Activated T-helper 2 cell treated with anti-CD3 and anti-CD28 coated beads, Interferon-gamma antibody, Interleukin-2, Interleukin-4, amounts not matched to agents 10 μg/mL and 5 μg/mL and 100 μg/mL, durations not matched to agents 14 hours and 24 hours and 36 hours (primary cell): ENCODE measurements at regions of chr4 and their contacts with region 1.

Region 1: GRCh38 chr4:183504064-183504929 is 561 bp upstream of the ING2 start:
- DNase-seq: peak; percentile 99
- H3K4me3 Mint-ChIP-seq: peak overlapping the region; percentile 92
- H3K27ac Mint-ChIP-seq: peak overlapping the region; percentile 85
- H3K4me1 Mint-ChIP-seq: peaks cover 35% of the 10 kb centered on the region
- H3K27me3 Mint-ChIP-seq: no peaks in the 10 kb centered on the region

Region 2: GRCh38 chr4:183444214-183445066 is 59.9 kb before region 1 on chr4 and contains the start of gene CDKN2AIP:
- intact Hi-C with region 1: loop called (anchors 1 kb)
- DNase-seq: peak; percentile 94
- H3K4me3 Mint-ChIP-seq: peak within 1 kb of the TSS; percentile 99
- H3K27ac Mint-ChIP-seq: peak within 1 kb of the TSS; percentile 98
- H3K4me1 Mint-ChIP-seq: peaks cover 38% of the 10 kb centered on the region
- H3K27me3 Mint-ChIP-seq: no peaks in the 10 kb centered on the region
- total RNA-seq, gene CDKN2AIP: 23.3 and 25.3 TPM in 2 replicates

Region 3: DNA sequence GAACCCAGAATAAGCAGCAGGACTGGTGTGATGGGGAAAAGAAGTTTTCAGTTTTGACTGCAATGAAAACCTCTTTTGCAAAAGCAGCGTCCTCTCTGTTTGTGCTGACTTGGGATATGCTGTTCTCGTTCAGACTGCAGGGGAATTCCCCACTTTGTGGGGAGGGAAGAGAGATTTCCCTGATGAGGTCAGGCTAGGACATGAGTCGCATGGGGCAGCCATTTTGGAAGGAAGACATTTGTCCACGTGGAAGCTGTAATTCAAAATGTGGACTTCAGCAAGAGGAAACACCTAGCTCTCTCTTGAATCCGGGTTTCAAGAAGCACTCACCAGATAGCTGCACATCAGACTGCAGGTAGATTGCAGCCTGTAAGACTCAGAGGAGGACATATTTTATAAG is 39.8 kb after region 1 on chr4:
- intact Hi-C with region 1: no loop called
- DNase-seq: no peak
- H3K4me3 Mint-ChIP-seq: no peak overlapping the region
- H3K27ac Mint-ChIP-seq: no peak overlapping the region
- H3K4me1 Mint-ChIP-seq: no peaks in the 10 kb centered on the region
- H3K27me3 Mint-ChIP-seq: peaks cover 8% of the 10 kb centered on the region

Region 4: DNA sequence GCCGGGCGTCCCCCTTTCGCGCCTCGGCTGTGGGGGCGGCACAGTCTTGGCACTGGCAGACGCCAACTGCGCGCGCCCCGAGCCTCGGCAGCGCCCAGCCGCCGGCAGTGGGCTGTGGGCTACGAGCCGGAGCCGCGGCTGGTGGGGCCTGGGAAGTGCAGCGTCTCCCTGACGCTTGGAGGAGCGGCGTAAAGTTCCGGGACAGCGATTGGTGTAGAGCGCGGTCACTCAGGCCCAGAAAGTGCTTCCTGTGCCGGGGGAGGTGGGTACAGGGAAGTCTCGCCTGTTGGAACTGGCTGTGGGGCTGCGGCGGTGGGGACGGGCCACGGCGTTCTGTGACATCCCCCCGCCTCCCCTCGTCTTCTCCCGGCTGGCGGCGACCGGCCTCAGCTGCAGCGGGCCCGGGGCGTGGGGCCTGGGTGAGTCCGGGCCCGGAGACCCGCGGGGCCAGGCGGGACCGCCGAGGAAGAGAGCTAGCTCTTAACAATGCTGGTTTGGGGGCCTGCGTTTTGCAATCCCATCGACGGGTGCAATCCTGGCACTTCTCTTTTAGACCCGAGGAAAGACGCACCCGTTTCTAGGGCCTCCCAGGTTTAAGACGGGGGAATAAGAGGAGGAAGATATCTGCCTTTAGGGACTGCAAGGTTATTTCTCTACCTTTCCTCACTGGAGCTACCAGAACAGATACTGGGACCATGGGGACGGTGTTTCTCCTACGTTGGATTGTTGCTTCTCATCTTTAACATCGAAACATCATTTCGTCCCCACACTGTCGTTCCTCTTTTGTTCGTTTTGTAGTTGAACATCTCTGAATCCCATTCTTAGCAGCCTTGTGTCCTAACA is 155.0 kb after region 1 on chr4 and contains the starts of genes RWDD4 and TRAPPC11:
- intact Hi-C with region 1: loop called (anchors 1 kb)
- DNase-seq: peak; percentile 95
- H3K4me3 Mint-ChIP-seq: peak within 1 kb of the TSS; percentile 93
- H3K27ac Mint-ChIP-seq: peak within 1 kb of the TSS; percentile 96
- H3K4me1 Mint-ChIP-seq: peaks cover 22% of the 10 kb centered on the region
- H3K27me3 Mint-ChIP-seq: no peaks in the 10 kb centered on the region
- total RNA-seq, gene RWDD4: 26.3 and 27.6 TPM in 2 replicates
- total RNA-seq, gene TRAPPC11: 28.1 and 32.0 TPM in 2 replicates

Region 5: GRCh38 chr4:184237612-184238011 is 733.3 kb after region 1 on chr4:
- intact Hi-C with region 1: loop called (anchors 10 kb)
- DNase-seq: peak; percentile 38
- H3K4me3 Mint-ChIP-seq: peak overlapping the region; percentile 9
- H3K27ac Mint-ChIP-seq: peak overlapping the region; percentile 85
- H3K4me1 Mint-ChIP-seq: peaks cover 37% of the 10 kb centered on the region
- H3K27me3 Mint-ChIP-seq: no peaks in the 10 kb centered on the region

Region 6: DNA sequence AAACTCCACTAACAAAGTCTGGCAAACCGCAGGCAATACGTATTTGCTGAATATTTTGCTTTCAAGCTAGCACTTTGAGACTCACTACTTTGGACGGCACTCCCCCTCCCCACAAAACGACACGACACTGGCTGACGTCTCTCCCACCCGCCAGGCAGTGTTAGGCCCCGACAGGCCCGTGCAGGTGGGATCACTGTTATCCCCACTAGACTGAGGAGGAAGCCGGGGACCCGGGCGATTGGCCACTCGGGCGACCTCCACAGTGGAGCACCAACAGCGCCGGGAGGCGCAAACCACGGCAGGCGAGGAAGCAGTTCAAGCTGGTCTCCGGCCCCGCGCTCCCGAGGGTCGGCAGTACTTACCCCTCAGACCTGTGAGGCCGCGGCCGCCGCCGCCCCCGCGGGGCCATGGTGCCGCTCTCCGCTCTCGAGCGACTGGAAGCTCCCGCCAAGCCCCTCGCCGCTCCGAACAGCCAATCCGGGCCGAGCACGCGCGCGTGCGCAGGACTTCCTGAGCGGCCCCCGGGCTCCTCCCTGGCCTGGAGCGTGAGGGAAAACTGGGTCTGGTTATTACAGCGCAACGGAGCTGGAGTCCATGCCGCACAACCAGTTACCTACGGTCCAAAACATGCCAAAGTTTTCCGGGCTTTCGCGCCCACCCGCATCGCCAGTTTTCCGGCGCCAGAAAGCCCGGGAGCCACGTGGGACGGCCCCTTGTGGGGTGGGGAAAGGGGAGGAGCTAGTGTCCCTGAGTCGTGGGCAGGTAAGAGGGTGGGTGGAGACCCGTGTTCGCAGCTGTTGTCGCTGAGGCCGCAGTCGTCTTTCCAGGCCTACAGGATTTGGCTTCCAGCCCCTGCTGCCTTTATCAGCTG is 1229.6 kb after region 1 on chr4 and contains the start of gene CENPU:
- intact Hi-C with region 1: loop called (anchors 5 kb)
- DNase-seq: peak; percentile 96
- H3K4me3 Mint-ChIP-seq: peak within 1 kb of the TSS; percentile 93
- H3K27ac Mint-ChIP-seq: peak within 1 kb of the TSS; percentile 87
- H3K4me1 Mint-ChIP-seq: peaks cover 37% of the 10 kb centered on the region
- H3K27me3 Mint-ChIP-seq: no peaks in the 10 kb centered on the region
- total RNA-seq, gene CENPU: 60.9 and 74.2 TPM in 2 replicates

Region 7: GRCh38 chr4:185471235-185472102 is 1967.2 kb after region 1 on chr4 and contains the start of gene CCDC110:
- intact Hi-C with region 1: loop called (anchors 5 kb)
- DNase-seq: peak; percentile 79
- H3K4me3 Mint-ChIP-seq: peak within 1 kb of the TSS; percentile 88
- H3K27ac Mint-ChIP-seq: no peak within 1 kb of the TSS
- H3K4me1 Mint-ChIP-seq: peaks cover 8% of the 10 kb centered on the region
- H3K27me3 Mint-ChIP-seq: peaks cover 44% of the 10 kb centered on the region
- total RNA-seq, gene CCDC110: not detected in 2 replicates